ENCODE measurements at regions of chr1 and their contacts with region 1.

Region 1: DNA sequence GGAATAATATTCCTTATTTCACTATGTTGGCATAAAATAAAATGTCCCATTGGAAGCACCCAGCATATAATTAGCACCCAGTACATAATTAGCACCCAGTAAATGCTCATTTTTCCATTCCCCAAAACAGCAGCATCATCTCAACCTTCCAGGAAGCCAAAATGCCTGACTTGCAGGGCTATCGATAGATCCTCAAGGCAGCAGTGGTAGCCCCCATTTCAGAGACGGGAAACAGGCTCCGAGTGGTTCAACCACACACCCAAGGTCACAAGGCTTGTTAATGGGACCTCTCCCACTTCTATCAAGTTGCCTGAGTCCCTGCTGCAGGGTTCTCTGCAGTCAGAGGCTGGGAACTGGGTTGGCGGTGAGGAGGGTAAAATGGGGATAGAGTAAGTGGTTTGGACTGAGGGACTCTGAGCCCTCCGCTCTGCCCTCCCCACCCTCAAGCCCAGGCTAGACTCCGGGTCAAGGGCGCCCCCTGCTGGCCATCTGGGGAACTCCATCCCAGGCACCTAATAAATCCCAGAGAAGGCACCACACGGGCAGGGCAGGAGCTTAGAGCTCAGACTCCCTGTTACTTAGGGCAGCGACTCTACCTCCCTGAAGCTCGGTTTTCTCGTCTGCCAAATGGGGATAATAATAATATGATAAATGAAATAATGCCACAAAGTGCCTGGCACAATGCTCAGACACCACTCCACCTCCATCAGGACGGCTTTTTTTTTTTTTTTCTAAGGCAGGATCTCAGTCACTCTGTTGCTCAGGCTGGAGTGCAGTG is 21.9 kb upstream of the LAPTM5 start:
- DNase-seq: peak; percentile 91
- ATAC-seq: peak; percentile 70

Region 2: DNA sequence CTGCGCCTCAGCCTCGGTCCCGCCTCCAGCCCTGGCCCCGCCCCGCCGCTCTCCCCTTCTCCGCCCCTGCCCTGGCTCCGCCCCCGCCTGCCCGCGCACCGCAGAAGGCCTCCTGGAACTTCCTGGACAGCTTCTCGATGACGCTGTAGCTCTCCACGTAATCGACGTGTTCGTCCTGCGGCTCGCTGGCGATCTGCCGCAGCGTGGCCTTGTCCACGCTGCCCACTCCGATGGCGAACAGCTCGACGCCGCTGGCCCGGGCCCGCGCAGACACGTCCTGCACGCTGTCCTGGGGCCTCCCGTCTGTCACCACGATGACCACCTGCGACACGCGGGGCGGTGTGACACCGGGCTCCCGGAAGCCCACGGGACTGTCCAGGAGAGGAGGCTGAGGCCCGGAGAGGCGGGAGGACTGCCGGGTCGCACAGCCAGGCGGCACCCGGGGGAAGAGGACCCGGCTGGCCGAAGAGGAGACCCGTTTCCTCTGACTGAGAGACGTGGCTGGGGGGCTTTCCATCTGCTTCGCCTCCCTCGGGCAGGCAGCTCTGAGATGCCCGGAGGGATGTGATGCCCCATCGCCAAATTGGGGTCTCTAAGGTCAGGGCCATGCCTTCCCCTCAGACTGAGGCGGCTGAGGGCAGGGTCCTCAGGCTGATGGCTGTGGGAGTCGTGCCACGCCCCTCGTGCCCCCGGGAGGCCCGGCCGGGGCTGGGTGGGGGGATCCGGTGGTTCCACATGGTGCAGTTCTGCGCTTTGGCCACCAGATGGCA is 60.7 kb before region 1 on chr1:
- intact Hi-C with region 1: loop called (anchors 2 kb)
- DNase-seq: peak; percentile 86
- ATAC-seq: peak; percentile 91

Region 3: GRCh38 chr1:30809514-30810263 is 30.2 kb after region 1 on chr1:
- intact Hi-C with region 1: no loop called
- DNase-seq: no peak
- ATAC-seq: peak; percentile 38

Region 4: DNA sequence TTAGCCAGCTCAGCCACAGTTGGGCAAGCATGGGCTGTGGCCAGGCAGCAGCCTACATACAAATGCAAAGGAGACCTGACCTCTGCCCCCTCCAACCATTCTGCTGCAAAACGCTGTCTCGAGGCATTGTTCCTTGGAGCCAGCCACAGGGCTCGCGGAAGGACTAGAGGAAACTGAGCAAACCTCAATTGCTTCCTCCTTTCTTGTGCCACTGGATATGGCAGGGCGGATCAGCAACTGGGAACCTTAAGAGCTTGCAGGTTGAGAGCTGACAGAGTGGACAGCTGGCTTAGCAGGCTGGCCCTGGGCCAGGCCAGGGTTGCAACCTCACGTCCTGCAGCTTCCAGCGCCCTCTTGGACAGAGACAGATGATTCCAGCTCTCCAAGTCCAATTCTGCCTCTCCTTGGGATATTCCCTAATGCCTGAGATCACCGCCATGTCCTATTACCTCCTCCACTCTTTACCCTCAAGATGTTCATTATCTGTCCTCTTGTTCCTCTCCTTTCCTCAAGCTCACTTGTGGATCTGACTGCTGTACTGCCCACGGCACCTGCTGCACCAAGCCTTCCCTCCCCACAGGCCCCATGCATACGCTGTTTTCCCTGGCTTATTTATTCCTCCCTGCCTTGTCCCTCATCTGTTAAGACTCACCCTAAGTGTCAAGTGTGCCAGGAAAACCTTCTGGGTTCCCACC is 61.6 kb after region 1 on chr1:
- intact Hi-C with region 1: no loop called
- DNase-seq: peak; percentile 78
- ATAC-seq: peak; percentile 90

Region 5: GRCh38 chr1:30852026-30852425 is 72.5 kb after region 1 on chr1:
- intact Hi-C with region 1: no loop called
- DNase-seq: peak; percentile 83
- ATAC-seq: peak; percentile 71